ENCODE measurements at regions of chr20 and their contacts with region 1.

Region 1: GRCh38 chr20:21137078-21137477 is 11.2 kb downstream of the KIZ start:
- DNase-seq: no peak
- ATAC-seq: no peak
- H3K4me3 ChIP-seq: no peak overlapping the region
- H3K27ac ChIP-seq: peak overlapping the region; percentile 8
- H3K4me1 ChIP-seq: peaks cover 74% of the 10 kb centered on the region
- H3K27me3 ChIP-seq: no peaks in the 10 kb centered on the region
- CTCF ChIP-seq: no peak
- EP300 ChIP-seq: no peak
- POLR2A ChIP-seq: no peak
- RAD21 ChIP-seq: no peak

Region 2: DNA sequence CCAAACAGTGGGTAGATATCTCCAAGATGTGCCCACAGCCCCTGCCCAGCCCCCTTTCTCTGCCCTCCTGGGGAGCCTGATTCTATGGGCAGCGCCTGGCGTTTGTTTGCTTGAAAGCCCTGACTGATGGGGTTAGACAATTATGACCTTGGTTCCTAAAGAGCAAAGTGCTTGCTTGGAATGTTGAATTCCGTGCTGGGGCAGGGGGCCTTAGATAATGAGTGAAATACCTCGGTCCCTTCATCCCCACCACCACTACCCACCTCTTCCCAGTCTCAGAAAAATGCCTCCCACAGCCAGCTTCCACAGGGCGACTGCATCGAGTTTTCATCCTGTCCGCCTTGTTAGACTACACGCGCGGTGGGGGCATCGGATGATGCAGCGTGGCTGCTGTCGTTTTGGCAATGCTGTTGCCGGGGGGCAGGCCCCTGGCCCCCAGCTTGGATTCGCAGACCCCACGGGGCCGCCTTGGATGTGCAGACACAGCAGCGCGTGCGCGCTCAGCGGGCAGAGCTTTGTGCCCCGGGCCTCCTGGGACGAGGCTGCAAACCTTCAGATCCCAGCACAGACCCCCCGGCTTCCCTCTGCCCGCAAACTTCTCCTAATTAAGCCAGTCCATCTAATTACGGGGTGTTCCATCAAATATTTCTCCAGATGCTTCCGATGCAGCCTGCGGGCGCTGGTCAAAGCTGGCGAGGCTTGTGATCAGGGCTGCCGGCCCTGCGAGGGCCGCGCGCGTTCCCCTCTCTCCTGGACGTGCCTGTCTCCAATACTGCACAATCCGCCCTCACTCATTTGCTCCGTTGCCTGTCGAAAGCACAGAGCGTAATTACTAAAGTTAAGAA is 117.0 kb before region 1 on chr20:
- CTCF ChIA-PET with region 1: no interaction called
- POLR2A ChIA-PET with region 1: no interaction called
- in situ Hi-C with region 1: no loop called
- intact Hi-C with region 1: loop called (anchors 1 kb)
- DNase-seq: peak; percentile 82
- ATAC-seq: peak; percentile 63
- H3K4me3 ChIP-seq: peak overlapping the region; percentile 13 to 51 (median 31); a peak in 5 of 6 replicates
- H3K27ac ChIP-seq: peak overlapping the region; percentile 50
- H3K4me1 ChIP-seq: peaks cover 72% of the 10 kb centered on the region
- H3K27me3 ChIP-seq: no peaks in the 10 kb centered on the region
- CTCF ChIP-seq: no peak
- EP300 ChIP-seq: peak in 1 of 2 experiments; percentile 78; a peak in 2 of 4 replicates
- POLR2A ChIP-seq: no peak
- RAD21 ChIP-seq: no peak

Region 3: DNA sequence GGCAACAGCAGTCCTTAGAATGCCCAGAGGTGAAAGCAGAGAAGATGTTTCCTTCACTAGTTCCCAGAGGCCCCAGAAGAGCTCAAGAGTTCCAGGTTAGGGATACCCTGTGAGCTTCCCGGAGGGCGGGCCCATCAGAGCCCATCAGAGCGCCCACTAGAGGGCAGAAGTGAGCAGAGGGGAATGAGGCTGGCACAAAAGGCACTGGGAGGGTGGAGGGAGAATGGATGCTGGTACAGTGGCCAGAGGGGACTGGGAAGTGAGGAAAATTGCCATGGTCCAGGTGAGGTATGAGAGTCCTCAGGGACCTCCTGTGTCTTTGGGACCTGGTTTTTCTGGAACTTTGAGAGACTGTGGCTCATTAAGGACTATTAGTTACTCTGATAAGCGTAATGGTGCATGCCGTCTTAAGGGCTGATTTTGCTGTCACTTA is 88.2 kb before region 1 on chr20:
- CTCF ChIA-PET with region 1: no interaction called
- POLR2A ChIA-PET with region 1: no interaction called
- in situ Hi-C with region 1: no loop called
- intact Hi-C with region 1: loop called (anchors 2 kb)
- DNase-seq: peak; percentile 55
- ATAC-seq: peak; percentile 77
- H3K4me3 ChIP-seq: no peak overlapping the region
- H3K27ac ChIP-seq: no peak overlapping the region
- H3K4me1 ChIP-seq: peaks cover 58% of the 10 kb centered on the region
- H3K27me3 ChIP-seq: no peaks in the 10 kb centered on the region
- CTCF ChIP-seq: peak; percentile 79
- EP300 ChIP-seq: no peak
- POLR2A ChIP-seq: no peak
- RAD21 ChIP-seq: peak; percentile 75

Region 4: DNA sequence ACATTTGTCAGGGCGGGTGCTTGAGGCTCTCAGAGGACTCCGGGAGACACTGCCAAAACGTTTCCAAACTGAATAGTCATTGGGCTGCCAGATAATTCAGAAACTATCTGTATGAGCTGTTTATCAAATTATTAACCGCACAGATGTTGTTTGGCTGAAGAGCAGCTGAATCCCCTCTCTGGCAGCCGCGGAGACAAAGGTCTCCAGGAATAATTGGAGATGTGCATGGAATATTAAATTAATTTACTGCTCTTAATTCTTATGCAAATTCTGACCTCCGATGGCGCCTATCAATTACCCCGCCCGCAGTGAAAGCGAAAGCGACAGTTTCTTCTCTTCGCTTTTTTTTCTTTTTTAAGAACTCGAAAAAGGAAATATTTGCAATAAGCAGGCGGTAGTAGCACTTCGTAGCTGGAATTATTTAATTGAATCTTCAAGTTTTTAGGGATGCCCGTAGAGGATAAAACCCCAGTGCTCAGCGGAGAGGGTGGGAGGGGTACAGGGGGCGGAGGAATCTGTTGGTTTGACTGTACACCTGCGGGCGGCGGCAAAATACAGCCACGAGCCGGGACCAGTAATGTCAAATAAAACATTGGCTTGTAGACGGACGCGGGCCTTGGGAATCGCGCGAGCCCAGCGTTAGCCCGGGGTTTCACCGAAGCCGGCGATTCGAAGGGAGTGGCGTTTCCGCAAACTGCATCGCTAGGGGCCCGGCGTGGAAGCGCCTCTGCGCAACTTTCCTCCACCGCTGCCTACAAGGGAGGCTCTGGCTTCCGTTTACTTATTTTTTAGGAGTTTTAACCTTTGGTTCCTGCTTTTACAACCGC is 37.1 kb before region 1 on chr20:
- CTCF ChIA-PET with region 1: no interaction called
- POLR2A ChIA-PET with region 1: no interaction called
- in situ Hi-C with region 1: no loop called
- intact Hi-C with region 1: loop called (anchors 5 kb)
- DNase-seq: no peak
- ATAC-seq: no peak
- H3K4me3 ChIP-seq: no peak overlapping the region
- H3K27ac ChIP-seq: no peak overlapping the region
- H3K4me1 ChIP-seq: peaks cover 36% of the 10 kb centered on the region
- H3K27me3 ChIP-seq: no peaks in the 10 kb centered on the region
- CTCF ChIP-seq: no peak
- EP300 ChIP-seq: no peak
- POLR2A ChIP-seq: no peak
- RAD21 ChIP-seq: no peak

Region 5: GRCh38 chr20:21125849-21126580 is 11.1 kb before region 1 on chr20 and contains the start of gene KIZ:
- CTCF ChIA-PET with region 1: interaction called, 3 read pairs
- POLR2A ChIA-PET with region 1: interaction called, 79 read pairs
- in situ Hi-C with region 1: no loop called
- intact Hi-C with region 1: loop called (anchors 1 kb)
- DNase-seq: peak; percentile 93
- ATAC-seq: peak; percentile 97
- H3K4me3 ChIP-seq: peak within 1 kb of the TSS; percentile 86 to 94 (median 93)
- H3K27ac ChIP-seq: peak within 1 kb of the TSS; percentile 80
- H3K4me1 ChIP-seq: peaks cover 48% of the 10 kb centered on the region
- H3K27me3 ChIP-seq: no peaks in the 10 kb centered on the region; a peak in 1 of 5 replicates
- CTCF ChIP-seq: peak; percentile 70
- EP300 ChIP-seq: peak in 1 of 2 experiments; percentile 35; a peak in 1 of 4 replicates
- POLR2A ChIP-seq: peak; percentile 98
- RAD21 ChIP-seq: peak; percentile 90
- total RNA-seq, gene KIZ: 46.3 and 55.6 TPM in 2 replicates

Region 6: DNA sequence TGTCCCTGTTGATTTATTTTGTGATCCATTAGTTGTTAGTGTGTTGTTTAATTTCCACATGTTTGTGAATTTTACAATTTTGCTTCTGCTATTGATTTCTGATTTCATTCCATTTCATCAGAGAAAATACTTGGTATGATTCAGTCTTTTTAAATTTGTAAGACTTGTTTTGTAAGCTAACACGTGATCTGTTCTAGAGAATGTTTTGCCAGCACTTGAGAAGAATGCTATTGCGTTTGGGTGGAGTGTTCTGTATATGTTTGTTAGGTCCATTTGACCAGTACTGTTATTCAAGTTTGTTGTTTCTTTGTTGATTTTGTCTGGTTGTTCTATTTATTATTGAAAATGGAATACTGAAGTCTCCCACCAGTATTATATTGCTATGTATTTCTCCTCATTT is 42.7 kb after region 1 on chr20:
- CTCF ChIA-PET with region 1: no interaction called
- POLR2A ChIA-PET with region 1: no interaction called
- in situ Hi-C with region 1: no loop called
- intact Hi-C with region 1: loop called (anchors 5 kb)
- DNase-seq: no peak
- ATAC-seq: no peak
- H3K4me3 ChIP-seq: no peak overlapping the region
- H3K27ac ChIP-seq: no peak overlapping the region
- H3K4me1 ChIP-seq: peaks cover 30% of the 10 kb centered on the region
- H3K27me3 ChIP-seq: no peaks in the 10 kb centered on the region
- CTCF ChIP-seq: no peak
- EP300 ChIP-seq: no peak
- POLR2A ChIP-seq: no peak
- RAD21 ChIP-seq: no peak

Measured in HepG2 (cell line).